ENCODE measurements at regions of chr7 and their contacts with region 1.

Region 1: DNA sequence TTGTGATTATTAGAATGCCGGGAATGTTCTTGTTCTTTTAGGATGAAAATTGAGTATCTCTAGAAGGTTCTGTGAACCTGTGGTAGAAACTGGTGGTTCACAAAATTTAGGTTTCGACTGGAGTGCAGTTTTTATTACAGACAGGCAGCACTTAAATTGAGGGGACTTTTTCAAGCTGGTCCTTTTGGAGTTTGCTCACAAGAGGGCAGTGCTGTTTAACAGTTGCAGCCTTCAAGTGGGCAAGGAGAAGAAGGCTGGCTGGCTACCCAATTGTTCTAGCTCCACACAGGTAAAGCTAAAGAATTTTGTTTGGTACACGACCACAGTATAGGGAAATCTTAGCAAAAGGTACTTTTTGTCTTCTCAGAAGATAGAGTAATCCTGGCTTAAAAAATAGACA is 233.6 kb downstream of the SNX13 start:
- DNase-seq: peak; percentile 46
- ATAC-seq: peak; percentile 89
- H3K4me3 ChIP-seq: no peak overlapping the region
- H3K27ac ChIP-seq: no peak overlapping the region
- H3K4me1 ChIP-seq: no peaks in the 10 kb centered on the region
- H3K27me3 ChIP-seq: no peaks in the 10 kb centered on the region
- CTCF ChIP-seq: peak; percentile 77
- EP300 ChIP-seq: no peak
- POLR2A ChIP-seq: no peak
- RAD21 ChIP-seq: 0 out of 2 replicates have a peak, but pooled peaks have one; percentile 37

Region 2: GRCh38 chr7:17546599-17546998 is 160.1 kb before region 1 on chr7:
- CTCF ChIA-PET with region 1: no interaction called
- POLR2A ChIA-PET with region 1: no interaction called
- in situ Hi-C with region 1: no loop called
- intact Hi-C with region 1: no loop called
- DNase-seq: no peak
- ATAC-seq: no peak
- H3K4me3 ChIP-seq: no peak overlapping the region
- H3K27ac ChIP-seq: no peak overlapping the region
- H3K4me1 ChIP-seq: peaks cover 17% of the 10 kb centered on the region
- H3K27me3 ChIP-seq: no peaks in the 10 kb centered on the region
- CTCF ChIP-seq: no peak
- EP300 ChIP-seq: no peak
- POLR2A ChIP-seq: no peak
- RAD21 ChIP-seq: no peak

Region 3: DNA sequence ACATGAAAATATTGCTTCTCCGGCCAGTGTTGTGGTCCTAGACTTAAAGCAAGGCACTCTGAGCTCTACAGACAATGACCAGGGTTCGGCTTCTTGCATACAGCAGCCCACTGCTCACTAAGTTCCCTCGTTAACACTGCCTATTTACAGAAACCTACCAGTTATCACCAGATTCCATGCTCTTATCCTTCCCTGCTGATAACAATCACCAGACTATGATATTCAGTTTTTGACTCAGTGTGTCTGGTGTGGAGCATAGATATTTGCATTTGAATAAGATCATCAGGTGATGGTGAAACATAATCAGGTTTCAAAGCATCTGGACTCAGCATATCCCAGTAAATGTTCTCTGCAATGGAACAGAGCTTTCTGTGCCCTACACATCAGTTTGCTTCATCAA is 51.3 kb after region 1 on chr7:
- CTCF ChIA-PET with region 1: no interaction called
- POLR2A ChIA-PET with region 1: no interaction called
- in situ Hi-C with region 1: no loop called
- intact Hi-C with region 1: loop called (anchors 1 kb)
- DNase-seq: no peak
- ATAC-seq: no peak
- H3K4me3 ChIP-seq: no peak overlapping the region
- H3K27ac ChIP-seq: no peak overlapping the region
- H3K4me1 ChIP-seq: peaks cover 7% of the 10 kb centered on the region; the same call in 1 of the 2 replicates
- H3K27me3 ChIP-seq: no peaks in the 10 kb centered on the region
- CTCF ChIP-seq: no peak
- EP300 ChIP-seq: no peak
- POLR2A ChIP-seq: no peak
- RAD21 ChIP-seq: no peak

Region 4: GRCh38 chr7:17991866-17992648 is 285.3 kb after region 1 on chr7:
- CTCF ChIA-PET with region 1: no interaction called
- POLR2A ChIA-PET with region 1: no interaction called
- in situ Hi-C with region 1: no loop called
- intact Hi-C with region 1: loop called (anchors 5 kb)
- DNase-seq: no peak
- ATAC-seq: peak; percentile 62
- H3K4me3 ChIP-seq: no peak overlapping the region
- H3K27ac ChIP-seq: no peak overlapping the region
- H3K4me1 ChIP-seq: no peaks in the 10 kb centered on the region
- H3K27me3 ChIP-seq: no peaks in the 10 kb centered on the region
- CTCF ChIP-seq: peak; percentile 32; the same call in 1 of the 2 replicates
- EP300 ChIP-seq: no peak
- POLR2A ChIP-seq: no peak
- RAD21 ChIP-seq: no peak

Region 5: GRCh38 chr7:18320971-18321567 is 614.3 kb after region 1 on chr7:
- CTCF ChIA-PET with region 1: interaction called, 3 read pairs
- POLR2A ChIA-PET with region 1: no interaction called
- in situ Hi-C with region 1: no loop called
- intact Hi-C with region 1: loop called (anchors 1 kb)
- DNase-seq: peak; percentile 23
- ATAC-seq: peak; percentile 68
- H3K4me3 ChIP-seq: no peak overlapping the region
- H3K27ac ChIP-seq: no peak overlapping the region
- H3K4me1 ChIP-seq: no peaks in the 10 kb centered on the region
- H3K27me3 ChIP-seq: no peaks in the 10 kb centered on the region
- CTCF ChIP-seq: peak; percentile 50
- EP300 ChIP-seq: no peak
- POLR2A ChIP-seq: no peak
- RAD21 ChIP-seq: no peak

Region 6: DNA sequence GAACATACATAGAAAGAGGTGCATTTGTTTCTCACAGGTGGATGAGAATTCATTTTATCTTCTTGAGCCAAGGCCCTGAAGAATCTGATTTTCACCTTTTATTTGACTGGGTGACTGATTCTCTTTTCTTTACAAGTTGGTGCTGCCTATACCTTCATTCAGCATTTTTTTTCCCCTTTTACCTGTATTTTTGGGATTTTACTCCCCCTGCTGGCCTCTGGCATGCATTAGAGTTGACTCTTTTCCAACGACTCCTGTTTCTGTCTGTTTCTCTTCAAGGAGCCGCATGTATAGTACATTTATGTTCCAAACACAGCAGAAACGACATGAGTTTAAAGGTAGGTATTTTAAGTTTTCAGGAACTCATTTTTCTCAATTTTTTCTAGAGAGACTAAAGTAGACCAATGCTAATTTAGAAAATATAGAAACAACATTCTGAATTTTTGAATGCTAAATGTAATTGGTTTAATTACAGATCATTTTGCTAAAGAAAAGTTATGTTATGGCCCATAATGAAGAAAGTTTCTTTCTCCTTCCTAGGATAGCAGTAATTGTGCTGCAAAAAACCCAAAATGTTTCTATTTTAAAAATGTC is 639.0 kb after region 1 on chr7:
- CTCF ChIA-PET with region 1: interaction called, 10 read pairs
- POLR2A ChIA-PET with region 1: no interaction called
- in situ Hi-C with region 1: no loop called
- intact Hi-C with region 1: loop called (anchors 1 kb)
- DNase-seq: peak; percentile 35
- ATAC-seq: peak; percentile 73
- H3K4me3 ChIP-seq: no peak overlapping the region
- H3K27ac ChIP-seq: no peak overlapping the region
- H3K4me1 ChIP-seq: no peaks in the 10 kb centered on the region
- H3K27me3 ChIP-seq: no peaks in the 10 kb centered on the region
- CTCF ChIP-seq: peak; percentile 70
- EP300 ChIP-seq: no peak
- POLR2A ChIP-seq: no peak
- RAD21 ChIP-seq: peak; percentile 22; the same call in 1 of the 2 replicates